Activated CD4-positive, alpha-beta memory T cell treated with anti-CD3 and anti-CD28 coated beads for 36 hours (primary cell): ENCODE measurements at regions of chr7 and their contacts with region 1.

Region 1: GRCh38 chr7:99504603-99505323 is at the start of gene ZKSCAN5:
- DNase-seq: peak; percentile 98
- H3K4me3 Mint-ChIP-seq: peak within 1 kb of the TSS; percentile 96
- H3K27ac Mint-ChIP-seq: peak within 1 kb of the TSS; percentile 98
- H3K4me1 Mint-ChIP-seq: peaks cover 21% of the 10 kb centered on the region
- H3K27me3 Mint-ChIP-seq: no peaks in the 10 kb centered on the region
- total RNA-seq, gene ZKSCAN5: 7.6 to 7.7 TPM

Region 2: GRCh38 chr7:99438573-99439480 is 65.9 kb before region 1 on chr7 and contains the starts of genes CPSF4 and PTCD1:
- CTCF ChIA-PET with region 1: interaction called, 4 read pairs
- POLR2A ChIA-PET with region 1: no interaction called
- intact Hi-C with region 1: loop called (anchors 2 kb)
- DNase-seq: peak; percentile 96
- H3K4me3 Mint-ChIP-seq: peak within 1 kb of the TSS; percentile 99
- H3K27ac Mint-ChIP-seq: peak within 1 kb of the TSS; percentile 95
- H3K4me1 Mint-ChIP-seq: peaks cover 35% of the 10 kb centered on the region
- H3K27me3 Mint-ChIP-seq: no peaks in the 10 kb centered on the region
- total RNA-seq, gene CPSF4: 57.7 to 60.3 TPM
- total RNA-seq, gene PTCD1: 7.4 TPM

Region 3: GRCh38 chr7:99551767-99552463 is 47.2 kb after region 1 on chr7 and contains the start of gene FAM200A:
- CTCF ChIA-PET with region 1: no interaction called
- POLR2A ChIA-PET with region 1: interaction called, 13 read pairs
- intact Hi-C with region 1: loop called (anchors 1 kb)
- DNase-seq: peak; percentile 89
- H3K4me3 Mint-ChIP-seq: peak within 1 kb of the TSS; percentile 91
- H3K27ac Mint-ChIP-seq: peak within 1 kb of the TSS; percentile 71
- H3K4me1 Mint-ChIP-seq: peaks cover 26% of the 10 kb centered on the region
- H3K27me3 Mint-ChIP-seq: no peaks in the 10 kb centered on the region
- total RNA-seq, gene FAM200A: 4.0 to 4.8 TPM

Region 4: GRCh38 chr7:99616359-99617191 is 111.8 kb after region 1 on chr7 and contains the start of gene ZSCAN25:
- CTCF ChIA-PET with region 1: no interaction called
- POLR2A ChIA-PET with region 1: interaction called, 9 read pairs
- intact Hi-C with region 1: loop called (anchors 1 kb)
- DNase-seq: peak; percentile 91
- H3K4me3 Mint-ChIP-seq: peak within 1 kb of the TSS; percentile 95
- H3K27ac Mint-ChIP-seq: peak within 1 kb of the TSS; percentile 92
- H3K4me1 Mint-ChIP-seq: peaks cover 43% of the 10 kb centered on the region
- H3K27me3 Mint-ChIP-seq: no peaks in the 10 kb centered on the region
- total RNA-seq, gene ZSCAN25: 15.9 to 20.3 TPM

Region 5: GRCh38 chr7:100081535-100082102 is 576.9 kb after region 1 on chr7 and contains the start of gene ZNF3:
- CTCF ChIA-PET with region 1: no interaction called
- POLR2A ChIA-PET with region 1: no interaction called
- intact Hi-C with region 1: loop called (anchors 10 kb)
- DNase-seq: peak; percentile 99
- H3K4me3 Mint-ChIP-seq: peak within 1 kb of the TSS; percentile 83
- H3K27ac Mint-ChIP-seq: peak within 1 kb of the TSS; percentile 85
- H3K4me1 Mint-ChIP-seq: peaks cover 29% of the 10 kb centered on the region
- H3K27me3 Mint-ChIP-seq: no peaks in the 10 kb centered on the region
- total RNA-seq, gene ZNF3: 18.0 to 18.6 TPM